Stomach (tissue), 19 donors: ENCODE measurements at regions of chr9 and their contacts with region 1.

Region 1: GRCh38 chr9:95979446-95979845 is 104.0 kb downstream of the ERCC6L2 start:
- DNase-seq: no peak
- H3K4me3 ChIP-seq: no peak overlapping the region
- H3K27ac ChIP-seq: peak overlapping the region in 1 of 5 donors; percentile 14
- H3K4me1 ChIP-seq: peaks cover 0 to 7% (median 0%) of the 10 kb centered on the region in 4 donors
- H3K27me3 ChIP-seq: no peaks in the 10 kb centered on the region
- CTCF ChIP-seq: no peak
- EP300 ChIP-seq: no peak
- POLR2A ChIP-seq: no peak

Region 2: GRCh38 chr9:95736370-95736769 is 243.1 kb before region 1 on chr9:
- intact Hi-C with region 1: loop called (anchors 10 kb)
- DNase-seq: no peak
- H3K4me3 ChIP-seq: no peak overlapping the region
- H3K27ac ChIP-seq: no peak overlapping the region
- H3K4me1 ChIP-seq: peaks cover 0 to 10% (median 2%) of the 10 kb centered on the region in 4 donors
- H3K27me3 ChIP-seq: no peaks in the 10 kb centered on the region
- CTCF ChIP-seq: no peak
- EP300 ChIP-seq: no peak
- POLR2A ChIP-seq: no peak